ENCODE measurements at regions of chr16 and their contacts with region 1.

Region 1: GRCh38 chr16:77660311-77660710 is 62.0 kb upstream of the NUDT7 start:
- DNase-seq: peak; percentile 45
- H3K4me3 ChIP-seq: peak overlapping the region; percentile 5 to 53; a peak in 3 of 4 replicates
- H3K27ac ChIP-seq: no peak overlapping the region
- H3K4me1 ChIP-seq: peaks cover 0 to 3% of the 10 kb centered on the region in 2 experiments; a peak in 1 of 4 replicates
- H3K27me3 ChIP-seq: no peaks in the 10 kb centered on the region
- CTCF ChIP-seq: peak; percentile 66
- EP300 ChIP-seq: no peak
- RAD21 ChIP-seq: peak; percentile 59

Region 2: GRCh38 chr16:77647726-77648125 is 12.6 kb before region 1 on chr16:
- CTCF ChIA-PET with region 1: interaction called, 34 read pairs
- POLR2A ChIA-PET with region 1: no interaction called
- DNase-seq: no peak
- H3K4me3 ChIP-seq: no peak overlapping the region
- H3K27ac ChIP-seq: no peak overlapping the region
- H3K4me1 ChIP-seq: no peaks in the 10 kb centered on the region
- H3K27me3 ChIP-seq: no peaks in the 10 kb centered on the region; the same call in 1 of the 2 replicates
- CTCF ChIP-seq: no peak
- EP300 ChIP-seq: no peak
- RAD21 ChIP-seq: no peak

Region 3: GRCh38 chr16:77675464-77676324 is 15.4 kb after region 1 on chr16:
- CTCF ChIA-PET with region 1: interaction called, 10 read pairs
- POLR2A ChIA-PET with region 1: no interaction called
- DNase-seq: peak; percentile 79
- H3K4me3 ChIP-seq: peak overlapping the region in 1 of 2 experiments; percentile 27; a peak in 2 of 4 replicates
- H3K27ac ChIP-seq: no peak overlapping the region
- H3K4me1 ChIP-seq: no peaks in the 10 kb centered on the region
- H3K27me3 ChIP-seq: no peaks in the 10 kb centered on the region
- CTCF ChIP-seq: peak; percentile 95
- EP300 ChIP-seq: no peak
- RAD21 ChIP-seq: peak; percentile 99